Heart left ventricle (tissue), 16 donors: ENCODE measurements at regions of chr11 and their contacts with region 1.

Region 1: DNA sequence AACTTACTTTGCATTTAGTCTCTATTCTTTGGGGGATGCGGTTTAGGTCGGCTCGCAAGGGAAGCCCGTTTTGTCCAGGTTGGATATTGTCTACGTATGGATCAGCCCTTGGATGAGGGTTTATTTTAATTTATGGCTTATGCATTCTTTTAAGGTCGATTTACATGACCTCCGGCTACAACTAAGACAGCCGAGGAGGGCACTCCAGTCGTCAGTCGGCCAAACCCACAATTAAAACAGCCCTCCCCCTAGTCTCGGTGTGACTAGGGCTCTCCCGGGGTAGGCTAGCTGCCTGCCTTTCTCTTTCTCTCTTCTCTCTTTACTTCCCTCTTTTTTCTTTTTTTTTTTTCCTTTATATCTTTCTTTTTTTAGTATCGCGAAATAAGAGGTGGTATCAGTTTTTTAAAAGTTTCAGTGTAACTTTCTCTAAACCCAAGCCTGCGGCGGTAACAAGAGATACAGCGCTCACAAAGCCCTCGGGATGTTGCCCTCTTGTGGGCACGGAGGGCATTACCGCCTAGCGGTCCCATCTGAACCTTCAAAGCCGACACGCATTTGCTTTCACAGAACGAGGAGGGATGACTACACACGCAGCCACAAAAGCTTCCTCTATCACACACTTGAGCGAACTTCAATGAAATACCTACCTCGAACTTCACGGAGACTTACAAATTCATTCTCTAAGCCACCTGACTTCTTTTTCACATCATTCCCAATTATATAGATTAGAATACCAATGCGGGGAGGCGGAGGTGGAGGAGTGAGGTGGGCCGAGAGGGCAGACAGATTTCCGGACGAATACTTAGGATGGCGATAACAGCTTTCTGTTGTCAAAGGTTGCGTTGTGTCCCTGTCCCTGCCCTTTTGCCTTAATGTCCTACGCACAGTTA is 132.3 kb upstream of the C11orf58 start:
- DNase-seq: peak; percentile 87 to 92 (median 90)
- ATAC-seq: peak; percentile 43 to 66 (median 56)
- H3K4me3 ChIP-seq: peak overlapping the region; percentile 69 to 93 (median 84)
- H3K27ac ChIP-seq: peak overlapping the region; percentile 85 to 100 (median 97)
- H3K4me1 ChIP-seq: peaks cover 0 to 38% (median 9%) of the 10 kb centered on the region in 12 donors
- H3K27me3 ChIP-seq: peaks cover 0 to 79% (median 3%) of the 10 kb centered on the region in 9 donors
- CTCF ChIP-seq: peak; percentile 95 to 99 (median 98)
- POLR2A ChIP-seq: peak in 1 of 2 donors; percentile 47

Region 2: GRCh38 chr11:15650105-15650938 is 955.8 kb before region 1 on chr11:
- intact Hi-C with region 1: loop called in 8 of 10 experiments (anchors 2 to 5 kb)
- DNase-seq: peak; percentile 95 to 98 (median 96)
- ATAC-seq: peak; percentile 97 to 100 (median 99)
- H3K4me3 ChIP-seq: peak overlapping the region in 10 of 12 donors; percentile 29 to 57 (median 44)
- H3K27ac ChIP-seq: peak overlapping the region; percentile 26 to 84 (median 76)
- H3K4me1 ChIP-seq: peaks cover 0 to 28% (median 17%) of the 10 kb centered on the region in 12 donors
- H3K27me3 ChIP-seq: peaks cover 0 to 16% (median 0%) of the 10 kb centered on the region in 9 donors
- CTCF ChIP-seq: peak; percentile 96 to 100 (median 99)
- POLR2A ChIP-seq: peak in 1 of 2 donors; percentile 13

Region 3: GRCh38 chr11:15826826-15827225 is 779.3 kb before region 1 on chr11:
- intact Hi-C with region 1: loop called in 7 of 10 experiments (anchors 2 to 10 kb)
- DNase-seq: peak in 4 of 5 donors; percentile 35 to 80 (median 44)
- ATAC-seq: peak in 2 of 4 donors; percentile 61 to 71
- H3K4me3 ChIP-seq: no peak overlapping the region
- H3K27ac ChIP-seq: peak overlapping the region in 1 of 12 donors; percentile 62
- H3K4me1 ChIP-seq: peaks cover 0 to 61% (median 30%) of the 10 kb centered on the region in 12 donors
- H3K27me3 ChIP-seq: no peaks in the 10 kb centered on the region
- CTCF ChIP-seq: peak; percentile 53 to 77 (median 62)
- POLR2A ChIP-seq: no peak

Region 4: GRCh38 chr11:16043617-16044016 is 562.5 kb before region 1 on chr11:
- intact Hi-C with region 1: loop called in 1 of 10 experiments (anchors 10 kb)
- DNase-seq: peak in 4 of 5 donors; percentile 18 to 55 (median 42)
- ATAC-seq: peak; percentile 61 to 91 (median 90)
- H3K4me3 ChIP-seq: no peak overlapping the region
- H3K27ac ChIP-seq: peak overlapping the region in 3 of 12 donors; percentile 19 to 23 (median 21)
- H3K4me1 ChIP-seq: peaks cover 0 to 4% (median 0%) of the 10 kb centered on the region in 12 donors
- H3K27me3 ChIP-seq: no peaks in the 10 kb centered on the region
- CTCF ChIP-seq: no peak
- POLR2A ChIP-seq: no peak

Region 5: GRCh38 chr11:16239141-16240105 is 366.7 kb before region 1 on chr11:
- intact Hi-C with region 1: loop called in 1 of 10 experiments (anchors 5 kb)
- DNase-seq: no peak
- ATAC-seq: peak; percentile 71 to 88 (median 76)
- H3K4me3 ChIP-seq: peak overlapping the region in 8 of 12 donors; percentile 5 to 22 (median 17)
- H3K27ac ChIP-seq: peak overlapping the region; percentile 35 to 83 (median 59)
- H3K4me1 ChIP-seq: peaks cover 0 to 51% (median 17%) of the 10 kb centered on the region in 12 donors
- H3K27me3 ChIP-seq: no peaks in the 10 kb centered on the region
- CTCF ChIP-seq: no peak
- POLR2A ChIP-seq: no peak

Region 6: GRCh38 chr11:16356057-16356760 is 249.9 kb before region 1 on chr11 and contains the start of gene SOX6:
- intact Hi-C with region 1: loop called in 3 of 10 experiments (anchors 5 to 10 kb)
- DNase-seq: peak in 1 of 5 donors; percentile 9
- ATAC-seq: peak; percentile 38 to 68 (median 66)
- H3K4me3 ChIP-seq: peak within 1 kb of the TSS in 4 of 12 donors; percentile 0 to 16 (median 12)
- H3K27ac ChIP-seq: peak within 1 kb of the TSS in 11 of 12 donors; percentile 3 to 76 (median 47)
- H3K4me1 ChIP-seq: peaks cover 0 to 44% (median 22%) of the 10 kb centered on the region in 12 donors
- H3K27me3 ChIP-seq: no peaks in the 10 kb centered on the region
- CTCF ChIP-seq: no peak
- POLR2A ChIP-seq: no peak
- total RNA-seq, gene SOX6: 11.6 to 39.6 (median 17.0) TPM

Region 7: GRCh38 chr11:16561150-16561549 is 45.0 kb before region 1 on chr11:
- intact Hi-C with region 1: no loop called
- DNase-seq: no peak
- ATAC-seq: no peak
- H3K4me3 ChIP-seq: no peak overlapping the region
- H3K27ac ChIP-seq: no peak overlapping the region
- H3K4me1 ChIP-seq: peaks cover 0 to 17% (median 4%) of the 10 kb centered on the region in 12 donors
- H3K27me3 ChIP-seq: no peaks in the 10 kb centered on the region
- CTCF ChIP-seq: no peak
- POLR2A ChIP-seq: no peak